Activated T-helper 1 cell treated with anti-CD3 and anti-CD28 coated beads, Interleukin-12 subunit alpha, Interleukin-12 subunit beta, Interleukin-2, Interleukin-4 antibody, amounts not matched to agents 30 ng/mL and 10 ng/mL and 1 ng/mL, durations not matched to agents 14 hours and 24 hours and 36 hours (primary cell): ENCODE measurements at regions of chr2 and their contacts with region 1.

Region 1: GRCh38 chr2:3651691-3652648 is 6.0 kb upstream of the ALLC start:
- DNase-seq: peak; percentile 56
- H3K4me3 Mint-ChIP-seq: peak overlapping the region; percentile 90
- H3K27ac Mint-ChIP-seq: peak overlapping the region; percentile 96
- H3K4me1 Mint-ChIP-seq: peaks cover 18% of the 10 kb centered on the region
- H3K27me3 Mint-ChIP-seq: peaks cover 2% of the 10 kb centered on the region

Region 2: GRCh38 chr2:1886405-1886992 is 1765.5 kb before region 1 on chr2:
- intact Hi-C with region 1: loop called (anchors 2 kb)
- DNase-seq: peak; percentile 11
- H3K4me3 Mint-ChIP-seq: no peak overlapping the region
- H3K27ac Mint-ChIP-seq: no peak overlapping the region
- H3K4me1 Mint-ChIP-seq: no peaks in the 10 kb centered on the region
- H3K27me3 Mint-ChIP-seq: peaks cover 7% of the 10 kb centered on the region

Region 3: GRCh38 chr2:3223080-3223923 is 428.7 kb before region 1 on chr2:
- intact Hi-C with region 1: loop called (anchors 1 kb)
- DNase-seq: peak; percentile 75
- H3K4me3 Mint-ChIP-seq: peak overlapping the region; percentile 40
- H3K27ac Mint-ChIP-seq: peak overlapping the region; percentile 100
- H3K4me1 Mint-ChIP-seq: peaks cover 61% of the 10 kb centered on the region
- H3K27me3 Mint-ChIP-seq: no peaks in the 10 kb centered on the region

Region 4: GRCh38 chr2:3379647-3380534 is 272.1 kb before region 1 on chr2 and contains the start of gene TRAPPC12:
- intact Hi-C with region 1: loop called (anchors 1 kb)
- DNase-seq: peak; percentile 91
- H3K4me3 Mint-ChIP-seq: peak within 1 kb of the TSS; percentile 99
- H3K27ac Mint-ChIP-seq: peak within 1 kb of the TSS; percentile 98
- H3K4me1 Mint-ChIP-seq: peaks cover 48% of the 10 kb centered on the region
- H3K27me3 Mint-ChIP-seq: no peaks in the 10 kb centered on the region
- total RNA-seq, gene TRAPPC12: 87.3 and 101 TPM in 2 replicates

Region 5: DNA sequence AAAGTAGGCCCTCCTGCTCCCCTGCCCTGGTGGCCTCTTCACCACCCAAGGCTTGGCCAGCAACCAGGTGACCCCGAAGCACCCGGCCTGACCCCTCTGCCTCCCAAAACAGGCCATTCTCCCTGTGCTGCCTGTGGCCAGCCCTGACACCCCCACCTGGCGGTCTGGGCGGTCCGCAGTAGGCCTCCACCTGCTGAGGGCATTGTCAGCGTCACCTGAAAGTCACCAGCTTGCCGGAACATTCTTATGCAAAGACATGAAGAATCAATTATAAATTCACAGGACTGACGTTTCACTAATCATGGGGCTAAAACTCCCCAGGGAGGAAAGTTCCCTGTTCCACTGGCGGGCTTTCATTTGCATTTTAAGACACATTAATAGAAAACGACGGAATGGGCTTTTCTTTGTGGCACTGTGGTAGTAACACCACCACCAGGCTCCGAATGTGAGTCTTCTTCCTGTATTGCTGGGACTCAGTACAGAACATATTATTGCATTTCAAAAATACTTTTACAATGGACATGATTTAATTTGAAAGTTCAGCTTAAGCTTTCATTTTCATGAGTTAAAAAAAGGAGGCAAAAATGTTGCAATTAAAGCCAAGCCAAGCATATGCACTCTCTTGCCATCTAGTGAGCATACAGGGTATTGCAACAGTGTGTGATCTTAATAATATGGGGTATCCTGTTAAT is 190.0 kb before region 1 on chr2:
- intact Hi-C with region 1: loop called (anchors 1 kb)
- DNase-seq: no peak
- H3K4me3 Mint-ChIP-seq: no peak overlapping the region
- H3K27ac Mint-ChIP-seq: no peak overlapping the region
- H3K4me1 Mint-ChIP-seq: peaks cover 7% of the 10 kb centered on the region
- H3K27me3 Mint-ChIP-seq: no peaks in the 10 kb centered on the region

Region 6: DNA sequence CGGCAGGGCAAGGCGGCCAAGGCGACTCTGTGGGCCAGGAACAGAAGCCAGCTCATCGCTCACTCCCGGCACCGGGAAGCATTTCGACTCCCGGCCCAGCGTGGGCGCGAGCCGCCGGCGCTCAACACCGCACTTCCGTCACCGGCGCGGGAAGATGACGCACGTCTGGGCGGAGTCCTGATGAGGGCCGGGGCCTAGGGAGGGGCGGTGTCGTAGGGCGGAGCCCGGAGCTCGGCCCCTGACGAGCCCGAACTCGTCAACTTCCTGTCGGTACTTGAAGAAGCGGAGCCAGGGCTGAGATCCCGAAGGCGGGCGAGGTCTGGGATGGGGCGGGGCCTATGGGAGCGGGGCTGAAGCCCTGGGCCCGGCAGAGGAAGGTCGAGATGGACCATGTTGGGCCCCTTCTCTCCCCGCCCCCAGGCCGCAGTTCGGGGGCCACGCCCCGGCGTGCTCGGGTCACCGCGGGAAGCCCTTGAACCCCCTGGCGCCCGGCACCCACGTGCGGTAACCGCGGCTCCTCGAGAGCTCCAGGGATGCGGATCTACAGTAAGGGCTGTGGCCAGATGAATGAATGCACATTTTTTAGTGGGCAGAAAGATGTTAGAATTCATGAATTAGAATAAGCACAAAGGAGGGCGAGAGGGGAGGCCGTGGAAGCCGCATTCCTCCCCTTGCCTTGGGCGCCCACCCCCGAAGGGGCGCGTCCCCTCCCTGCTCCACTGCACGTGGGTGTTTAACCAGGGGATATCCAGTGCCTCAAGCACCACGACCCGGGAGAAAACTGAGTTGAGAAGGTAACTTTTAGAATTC is 93.6 kb before region 1 on chr2 and contains the start of gene RNASEH1:
- intact Hi-C with region 1: loop called (anchors 1 kb)
- DNase-seq: peak; percentile 98
- H3K4me3 Mint-ChIP-seq: peak within 1 kb of the TSS; percentile 93
- H3K27ac Mint-ChIP-seq: peak within 1 kb of the TSS; percentile 97
- H3K4me1 Mint-ChIP-seq: peaks cover 20% of the 10 kb centered on the region
- H3K27me3 Mint-ChIP-seq: no peaks in the 10 kb centered on the region
- total RNA-seq, gene RNASEH1: 30.5 and 31.6 TPM in 2 replicates

Region 7: GRCh38 chr2:3595985-3596384 is 56.0 kb before region 1 on chr2:
- intact Hi-C with region 1: loop called (anchors 1 kb)
- DNase-seq: no peak
- H3K4me3 Mint-ChIP-seq: no peak overlapping the region
- H3K27ac Mint-ChIP-seq: no peak overlapping the region
- H3K4me1 Mint-ChIP-seq: peaks cover 30% of the 10 kb centered on the region
- H3K27me3 Mint-ChIP-seq: peaks cover 12% of the 10 kb centered on the region